ENCODE measurements at regions of chr12 and their contacts with region 1.

Region 1: GRCh38 chr12:120194534-120195395 is at the start of gene GCN1:
- DNase-seq: peak; percentile 82
- H3K4me3 Mint-ChIP-seq: peak within 1 kb of the TSS; percentile 80
- H3K27ac Mint-ChIP-seq: peak within 1 kb of the TSS; percentile 89
- H3K4me1 Mint-ChIP-seq: peaks cover 23% of the 10 kb centered on the region
- H3K27me3 Mint-ChIP-seq: no peaks in the 10 kb centered on the region
- CTCF ChIP-seq: no peak
- total RNA-seq, gene GCN1: 116 and 117 TPM in 2 replicates

Region 2: DNA sequence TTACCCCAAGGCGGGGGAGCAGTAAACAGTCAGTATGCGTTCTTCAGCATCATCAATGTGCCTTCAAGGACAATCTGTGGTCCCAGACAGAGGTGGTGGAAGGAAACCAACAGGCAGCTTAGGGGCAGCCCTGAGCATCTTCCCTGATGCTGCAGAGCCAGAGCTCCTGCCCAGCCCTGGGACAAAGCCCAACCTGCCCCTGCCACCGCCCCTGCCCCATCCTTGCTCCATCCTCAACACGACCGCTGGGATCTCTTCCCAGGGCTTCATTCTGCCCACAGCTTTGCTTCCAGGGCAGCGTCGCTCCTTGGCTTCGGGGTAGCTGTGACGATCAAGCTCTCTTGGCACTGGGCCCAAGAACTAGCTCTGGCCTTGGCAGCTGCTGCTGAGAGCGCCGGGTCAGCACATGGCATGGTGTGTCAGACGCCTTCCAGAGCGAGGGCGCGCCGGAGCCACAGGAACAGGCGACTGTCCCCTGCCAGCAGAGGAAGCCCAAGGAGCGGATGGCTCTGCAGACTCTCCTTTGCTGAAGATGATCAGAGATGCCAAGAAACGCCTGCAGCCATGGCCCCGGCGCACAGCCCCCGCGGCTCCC is 94.2 kb before region 1 on chr12:
- CTCF ChIA-PET with region 1: no interaction called
- POLR2A ChIA-PET with region 1: no interaction called
- intact Hi-C with region 1: no loop called
- DNase-seq: no peak
- H3K4me3 Mint-ChIP-seq: no peak overlapping the region
- H3K27ac Mint-ChIP-seq: no peak overlapping the region
- H3K4me1 Mint-ChIP-seq: peaks cover 7% of the 10 kb centered on the region
- H3K27me3 Mint-ChIP-seq: no peaks in the 10 kb centered on the region
- CTCF ChIP-seq: no peak

Region 3: DNA sequence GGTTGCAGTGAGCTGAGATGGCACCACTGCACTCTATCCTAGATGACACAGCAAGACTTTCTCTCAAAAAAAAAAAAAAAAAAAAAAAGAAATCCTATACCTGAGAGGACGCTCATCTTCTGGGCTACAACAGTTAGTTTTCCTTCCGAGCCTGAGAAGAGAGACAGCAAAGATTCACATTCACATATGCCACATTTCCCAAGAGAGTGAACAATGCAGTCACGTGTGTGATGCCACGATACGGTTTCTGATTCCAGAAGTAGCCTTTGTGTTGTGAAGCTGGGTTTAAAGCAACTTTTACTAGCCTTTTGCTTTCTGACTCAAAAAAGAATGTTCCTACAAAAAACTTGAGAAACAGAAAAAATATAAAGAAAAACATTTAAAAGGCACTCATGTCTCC is 19.7 kb before region 1 on chr12:
- CTCF ChIA-PET with region 1: interaction called, 3 read pairs
- POLR2A ChIA-PET with region 1: interaction called, 12 read pairs
- intact Hi-C with region 1: no loop called
- DNase-seq: no peak
- H3K4me3 Mint-ChIP-seq: no peak overlapping the region
- H3K27ac Mint-ChIP-seq: no peak overlapping the region
- H3K4me1 Mint-ChIP-seq: no peaks in the 10 kb centered on the region
- H3K27me3 Mint-ChIP-seq: no peaks in the 10 kb centered on the region
- CTCF ChIP-seq: no peak

Region 4: DNA sequence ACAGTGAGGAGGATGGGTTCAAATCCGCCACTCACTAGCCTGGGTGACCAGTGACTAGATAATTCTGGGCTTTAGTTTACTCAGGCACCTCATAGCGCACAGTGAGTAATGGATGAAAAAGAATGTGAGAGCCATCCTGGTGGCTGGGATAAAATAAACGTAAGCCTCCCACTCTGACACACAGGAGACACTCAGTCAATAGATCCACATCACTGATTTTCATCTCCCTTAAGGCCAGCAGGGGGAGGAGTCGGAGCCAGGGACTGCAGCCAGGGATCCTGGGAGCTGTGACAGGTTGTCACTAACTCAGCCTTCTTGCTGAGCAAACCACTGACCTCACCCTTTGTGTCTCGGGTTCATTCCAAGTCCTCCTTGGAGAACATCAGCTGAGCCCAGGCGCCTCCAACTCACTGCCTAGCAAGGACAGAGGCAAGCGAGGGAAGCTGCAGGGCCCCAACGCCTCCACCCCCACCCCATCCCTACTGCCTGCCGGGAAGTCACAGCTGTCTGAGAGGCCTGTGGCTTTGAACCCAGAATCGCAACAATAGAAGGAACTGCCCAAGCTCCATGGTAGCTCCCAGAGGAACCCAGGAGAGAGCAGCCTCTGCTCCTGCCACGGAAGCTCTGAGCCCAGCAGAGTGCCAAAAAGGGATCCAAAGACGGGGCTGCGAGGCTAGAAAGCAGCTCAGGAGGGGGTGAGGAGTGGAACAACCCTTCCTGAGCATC is 40.0 kb after region 1 on chr12:
- CTCF ChIA-PET with region 1: interaction called, 86 read pairs
- POLR2A ChIA-PET with region 1: interaction called, 257 read pairs
- intact Hi-C with region 1: no loop called
- DNase-seq: peak; percentile 92
- H3K4me3 Mint-ChIP-seq: peak overlapping the region; percentile 27
- H3K27ac Mint-ChIP-seq: peak overlapping the region; percentile 79
- H3K4me1 Mint-ChIP-seq: peaks cover 74% of the 10 kb centered on the region
- H3K27me3 Mint-ChIP-seq: no peaks in the 10 kb centered on the region
- CTCF ChIP-seq: peak; percentile 35

Region 5: GRCh38 chr12:120249875-120250795 is 55.4 kb after region 1 on chr12:
- CTCF ChIA-PET with region 1: no interaction called
- POLR2A ChIA-PET with region 1: interaction called, 73 read pairs
- intact Hi-C with region 1: no loop called
- DNase-seq: no peak
- H3K4me3 Mint-ChIP-seq: no peak overlapping the region
- H3K27ac Mint-ChIP-seq: peak overlapping the region; percentile 81
- H3K4me1 Mint-ChIP-seq: peaks cover 62% of the 10 kb centered on the region
- H3K27me3 Mint-ChIP-seq: no peaks in the 10 kb centered on the region
- CTCF ChIP-seq: no peak

Region 6: GRCh38 chr12:120265473-120266179 is 70.9 kb after region 1 on chr12 and contains the start of gene PXN:
- CTCF ChIA-PET with region 1: interaction called, 90 read pairs
- POLR2A ChIA-PET with region 1: interaction called, 236 read pairs
- intact Hi-C with region 1: no loop called
- DNase-seq: peak; percentile 72
- H3K4me3 Mint-ChIP-seq: peak within 1 kb of the TSS; percentile 95
- H3K27ac Mint-ChIP-seq: peak within 1 kb of the TSS; percentile 94
- H3K4me1 Mint-ChIP-seq: peaks cover 28% of the 10 kb centered on the region
- H3K27me3 Mint-ChIP-seq: no peaks in the 10 kb centered on the region
- CTCF ChIP-seq: peak; percentile 84
- total RNA-seq, gene PXN: 216 and 256 TPM in 2 replicates

Region 7: DNA sequence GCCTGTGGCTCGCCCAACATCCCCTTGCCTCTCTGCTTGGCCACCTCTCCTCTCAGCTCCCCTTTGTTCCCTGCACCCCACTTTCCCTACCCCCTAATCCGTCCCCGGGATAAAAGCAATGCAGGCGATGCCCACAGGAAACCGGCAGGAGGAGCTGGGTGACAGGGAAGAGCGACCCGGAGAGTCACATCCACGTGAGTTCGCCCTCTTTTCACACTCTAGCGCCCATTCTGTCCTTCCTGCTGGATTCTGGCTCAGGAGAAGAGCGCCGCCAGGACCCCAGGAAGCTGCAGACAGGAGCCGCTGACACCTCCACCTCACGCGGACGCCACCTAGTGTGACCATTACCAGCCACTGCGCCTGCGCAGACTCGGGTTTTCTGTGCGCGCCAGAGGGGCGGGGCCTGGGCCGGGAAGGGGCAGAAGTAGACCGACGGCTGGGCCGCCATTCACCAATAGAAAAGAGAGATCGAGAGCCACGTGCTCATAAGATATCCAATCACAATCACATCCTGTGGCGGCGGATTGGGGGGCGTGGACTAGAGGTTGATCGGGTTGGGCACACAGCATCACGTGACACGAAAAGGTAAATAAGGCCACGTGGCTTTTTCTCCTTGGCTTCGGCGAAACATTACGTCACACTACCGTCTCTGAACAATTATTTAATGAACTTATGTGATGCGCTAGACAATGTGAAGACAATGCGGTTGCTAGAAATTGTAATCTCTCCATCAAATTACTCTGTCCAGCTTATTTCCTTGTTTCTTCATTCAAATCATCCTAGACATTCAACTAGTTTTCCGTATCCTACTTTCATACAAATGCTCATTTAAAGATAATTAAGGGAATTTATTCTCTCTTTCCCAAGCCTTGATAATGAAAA is 122.7 kb after region 1 on chr12:
- CTCF ChIA-PET with region 1: no interaction called
- POLR2A ChIA-PET with region 1: interaction called, 16 read pairs
- intact Hi-C with region 1: no loop called
- DNase-seq: peak; percentile 100
- H3K4me3 Mint-ChIP-seq: peak overlapping the region; percentile 95
- H3K27ac Mint-ChIP-seq: peak overlapping the region; percentile 97
- H3K4me1 Mint-ChIP-seq: peaks cover 15% of the 10 kb centered on the region
- H3K27me3 Mint-ChIP-seq: no peaks in the 10 kb centered on the region
- CTCF ChIP-seq: peak; percentile 54